Esophagus muscularis mucosa (tissue), 4 donors: ENCODE measurements at regions of chr17 and their contacts with region 1.

Region 1: DNA sequence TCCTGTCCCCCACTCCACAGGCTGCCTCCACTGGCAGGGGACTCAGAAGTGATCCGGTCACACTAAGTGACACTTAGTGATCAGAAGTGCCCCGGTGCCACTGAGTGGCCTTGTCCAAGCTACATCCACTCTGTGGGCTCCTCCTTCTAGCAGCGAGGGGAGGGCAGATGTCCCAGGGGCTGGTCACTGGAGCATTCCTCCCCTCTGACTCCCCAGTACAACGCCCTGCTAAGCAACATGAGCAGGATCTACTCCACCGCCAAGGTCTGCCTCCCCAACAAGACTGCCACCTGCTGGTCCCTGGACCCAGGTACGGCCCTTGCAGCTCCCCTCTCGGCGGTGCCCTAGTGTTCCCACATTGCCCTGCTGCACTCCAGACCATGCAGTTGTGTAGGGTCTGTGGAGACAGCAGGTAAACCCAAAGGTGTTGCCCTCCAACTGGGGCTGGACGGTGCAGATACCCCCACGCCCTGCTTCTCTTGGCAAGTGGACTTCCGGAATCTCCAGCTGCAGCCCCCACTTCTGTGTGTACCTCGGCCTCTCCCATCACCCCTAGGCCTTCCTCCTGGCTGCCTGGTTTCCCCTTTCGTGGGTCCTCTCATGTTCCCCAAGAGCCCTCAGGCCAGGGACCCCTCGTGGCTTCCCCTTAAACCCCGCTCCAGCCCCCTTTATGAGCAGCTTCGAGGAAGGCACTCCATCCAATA is 2.1 kb downstream of the ACE start:
- DNase-seq: no peak
- H3K4me3 ChIP-seq: no peak overlapping the region
- H3K27ac ChIP-seq: no peak overlapping the region
- H3K4me1 ChIP-seq: peaks cover 33 to 47% (median 42%) of the 10 kb centered on the region in 4 donors
- H3K27me3 ChIP-seq: peaks cover 0 to 72% (median 22%) of the 10 kb centered on the region in 4 donors
- CTCF ChIP-seq: peak; percentile 53 to 66 (median 53)
- EP300 ChIP-seq: no peak
- POLR2A ChIP-seq: no peak

Region 2: GRCh38 chr17:63282455-63282854 is 196.5 kb before region 1 on chr17:
- intact Hi-C with region 1: no loop called
- DNase-seq: no peak
- H3K4me3 ChIP-seq: no peak overlapping the region
- H3K27ac ChIP-seq: no peak overlapping the region
- H3K4me1 ChIP-seq: peaks cover 0 to 38% (median 33%) of the 10 kb centered on the region in 4 donors
- H3K27me3 ChIP-seq: no peaks in the 10 kb centered on the region
- CTCF ChIP-seq: no peak
- EP300 ChIP-seq: no peak
- POLR2A ChIP-seq: no peak

Region 3: GRCh38 chr17:63434876-63435684 is 43.9 kb before region 1 on chr17:
- intact Hi-C with region 1: loop called (anchors 5 kb)
- DNase-seq: no peak
- H3K4me3 ChIP-seq: no peak overlapping the region
- H3K27ac ChIP-seq: peak overlapping the region; percentile 44 to 74 (median 57)
- H3K4me1 ChIP-seq: peaks cover 41 to 67% (median 66%) of the 10 kb centered on the region in 4 donors
- H3K27me3 ChIP-seq: peaks cover 0 to 9% (median 0%) of the 10 kb centered on the region in 4 donors
- CTCF ChIP-seq: no peak
- EP300 ChIP-seq: no peak
- POLR2A ChIP-seq: no peak